ENCODE measurements at regions of chr3 and their contacts with region 1.

Region 1: DNA sequence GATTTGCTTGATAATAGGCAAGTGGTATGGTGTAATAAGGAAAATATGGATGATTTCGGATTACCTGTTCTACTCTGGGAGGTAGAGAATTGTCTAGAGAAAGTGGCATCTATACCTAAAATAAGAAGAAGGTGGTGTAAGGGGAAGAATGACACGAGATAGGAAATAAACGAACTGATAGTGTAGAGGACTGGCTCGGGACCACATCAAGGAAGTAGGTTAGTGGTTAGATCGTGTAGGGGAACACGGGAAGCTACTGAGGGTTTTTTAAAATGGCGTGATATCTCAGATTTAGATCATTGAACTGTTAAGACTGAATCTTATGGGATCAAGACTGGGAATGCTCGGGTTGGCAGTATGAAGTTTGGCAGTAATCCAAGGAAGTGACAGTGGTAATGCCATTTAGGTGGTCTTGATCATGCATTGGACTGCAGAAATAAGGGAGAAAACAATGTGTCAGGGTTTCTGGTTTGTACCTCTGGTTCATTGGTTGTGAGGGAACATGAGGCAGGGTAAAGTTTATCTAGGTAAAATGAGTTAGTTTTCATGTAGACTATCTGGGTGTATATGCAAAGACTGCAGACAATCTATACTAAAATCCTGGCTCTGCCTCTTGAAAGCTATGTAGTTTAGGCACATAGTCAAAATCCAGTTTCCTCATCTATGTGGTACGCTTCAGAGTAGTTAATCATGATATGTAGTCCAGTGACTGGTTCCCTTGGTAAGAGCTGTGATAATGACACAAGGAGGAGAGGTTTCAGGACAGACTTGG is 7.4 kb downstream of the RPL14 start:
- DNase-seq: peak in 1 of 4 experiments; percentile 47
- ATAC-seq: peak; percentile 51
- H3K4me3 ChIP-seq: no peak overlapping the region
- H3K27ac ChIP-seq: peak overlapping the region; percentile 2; the same call in 2 of the 3 replicates
- H3K4me1 ChIP-seq: peaks cover 6 to 7% of the 10 kb centered on the region in 2 experiments; a peak in 3 of 5 replicates
- H3K27me3 ChIP-seq: no peaks in the 10 kb centered on the region
- CTCF ChIP-seq: no peak
- EP300 ChIP-seq: no peak
- POLR2A ChIP-seq: peak; percentile 78
- RAD21 ChIP-seq: no peak

Region 2: DNA sequence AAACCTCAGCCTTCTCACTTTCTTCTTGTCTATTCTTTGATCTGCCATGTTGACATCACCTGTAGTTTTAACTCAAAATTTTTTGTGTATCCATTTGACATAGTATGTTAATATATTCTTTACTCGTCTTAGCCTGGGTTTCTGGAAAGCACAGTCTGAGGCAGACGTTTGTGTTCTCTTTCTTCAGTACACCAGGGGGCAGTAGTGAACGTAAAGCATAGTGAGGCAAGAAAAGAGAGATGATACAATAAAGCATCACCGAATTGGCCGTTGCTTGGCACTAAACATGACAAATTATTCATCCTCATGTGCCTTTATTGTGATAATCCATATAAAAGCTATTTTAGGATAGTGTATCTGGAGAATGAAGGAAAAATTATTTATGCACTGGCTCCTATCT is 796.1 kb before region 1 on chr3:
- CTCF ChIA-PET with region 1: no interaction called
- POLR2A ChIA-PET with region 1: no interaction called
- in situ Hi-C with region 1: no loop called
- intact Hi-C with region 1: no loop called
- DNase-seq: peak; percentile 54 to 71 (median 63)
- ATAC-seq: peak; percentile 91
- H3K4me3 ChIP-seq: no peak overlapping the region
- H3K27ac ChIP-seq: no peak overlapping the region
- H3K4me1 ChIP-seq: peaks cover 0 to 6% of the 10 kb centered on the region in 2 experiments; a peak in 3 of 5 replicates
- H3K27me3 ChIP-seq: no peaks in the 10 kb centered on the region
- CTCF ChIP-seq: peak; percentile 66 to 77 (median 75)
- EP300 ChIP-seq: no peak
- POLR2A ChIP-seq: no peak
- RAD21 ChIP-seq: peak; percentile 39 to 63; a peak in 3 of 4 replicates

Region 3: GRCh38 chr3:40229386-40229785 is 235.1 kb before region 1 on chr3:
- CTCF ChIA-PET with region 1: no interaction called
- POLR2A ChIA-PET with region 1: no interaction called
- in situ Hi-C with region 1: no loop called
- intact Hi-C with region 1: no loop called
- DNase-seq: no peak
- ATAC-seq: no peak
- H3K4me3 ChIP-seq: no peak overlapping the region
- H3K27ac ChIP-seq: no peak overlapping the region
- H3K4me1 ChIP-seq: no peaks in the 10 kb centered on the region; a peak in 2 of 5 replicates
- H3K27me3 ChIP-seq: peaks cover 6 to 30% of the 10 kb centered on the region in 2 experiments; a peak in 2 of 5 replicates
- CTCF ChIP-seq: no peak
- EP300 ChIP-seq: no peak
- POLR2A ChIP-seq: no peak
- RAD21 ChIP-seq: no peak

Region 4: DNA sequence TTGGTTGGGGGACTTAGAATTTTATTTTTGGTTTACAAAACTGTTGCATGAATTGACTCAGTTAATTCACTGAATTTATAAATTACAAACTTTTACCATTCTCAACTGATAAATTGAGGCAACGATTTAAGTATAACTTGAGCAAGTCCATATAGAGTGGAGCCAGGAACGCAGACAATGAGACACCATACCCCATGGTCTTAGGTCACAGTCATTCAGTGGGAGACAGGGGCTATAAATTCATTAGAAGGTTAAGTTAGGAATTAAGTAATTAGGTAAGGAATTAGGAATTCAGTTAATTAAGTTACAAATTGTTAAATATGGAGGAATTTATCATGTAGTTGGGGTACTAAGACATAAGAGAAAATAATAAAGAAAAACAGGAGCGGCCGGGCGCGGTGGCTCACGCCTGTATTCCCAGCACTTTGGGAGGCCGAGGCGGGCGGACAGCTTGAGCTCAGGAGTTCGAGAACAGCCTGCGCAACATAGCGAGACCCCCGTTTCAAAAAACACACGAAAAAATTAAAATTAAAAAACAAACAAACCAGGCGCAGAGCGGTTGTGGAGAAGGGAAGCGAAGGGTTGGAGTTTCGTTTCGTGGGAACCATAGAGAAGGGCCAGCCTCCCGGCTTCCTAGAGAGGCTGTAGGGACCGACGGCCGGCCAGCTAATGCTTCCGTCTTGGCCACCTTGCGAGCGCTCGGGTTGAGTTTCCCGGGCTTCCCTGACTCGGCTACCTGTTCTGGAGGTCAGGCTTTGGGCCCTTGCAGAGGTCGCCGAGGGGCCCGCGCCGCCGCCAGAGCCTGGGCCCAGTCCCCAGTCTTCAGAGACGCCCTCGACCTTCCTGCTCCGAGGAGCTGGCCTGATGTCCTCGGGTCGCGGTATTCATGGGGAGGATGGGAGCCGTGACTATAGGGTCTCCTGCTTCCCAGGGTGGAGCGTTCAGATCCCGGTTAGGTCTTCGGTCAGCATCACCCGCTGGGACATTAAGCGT is 12.2 kb after region 1 on chr3 and contains the start of gene ZNF619:
- CTCF ChIA-PET with region 1: no interaction called
- POLR2A ChIA-PET with region 1: interaction called, 102 read pairs
- in situ Hi-C with region 1: no loop called
- intact Hi-C with region 1: no loop called
- DNase-seq: peak; percentile 86 to 88 (median 87)
- ATAC-seq: peak; percentile 89
- H3K4me3 ChIP-seq: peak within 1 kb of the TSS; percentile 66
- H3K27ac ChIP-seq: peak within 1 kb of the TSS; percentile 78
- H3K4me1 ChIP-seq: peaks cover 4 to 5% of the 10 kb centered on the region in 2 experiments; a peak in 3 of 5 replicates
- H3K27me3 ChIP-seq: no peaks in the 10 kb centered on the region
- CTCF ChIP-seq: no peak
- EP300 ChIP-seq: no peak
- POLR2A ChIP-seq: peak; percentile 87
- RAD21 ChIP-seq: no peak
- polyA plus RNA-seq, gene ZNF619: 1.3 to 1.5 TPM